ENCODE measurements at regions of chr20 and their contacts with region 1.

Region 1: DNA sequence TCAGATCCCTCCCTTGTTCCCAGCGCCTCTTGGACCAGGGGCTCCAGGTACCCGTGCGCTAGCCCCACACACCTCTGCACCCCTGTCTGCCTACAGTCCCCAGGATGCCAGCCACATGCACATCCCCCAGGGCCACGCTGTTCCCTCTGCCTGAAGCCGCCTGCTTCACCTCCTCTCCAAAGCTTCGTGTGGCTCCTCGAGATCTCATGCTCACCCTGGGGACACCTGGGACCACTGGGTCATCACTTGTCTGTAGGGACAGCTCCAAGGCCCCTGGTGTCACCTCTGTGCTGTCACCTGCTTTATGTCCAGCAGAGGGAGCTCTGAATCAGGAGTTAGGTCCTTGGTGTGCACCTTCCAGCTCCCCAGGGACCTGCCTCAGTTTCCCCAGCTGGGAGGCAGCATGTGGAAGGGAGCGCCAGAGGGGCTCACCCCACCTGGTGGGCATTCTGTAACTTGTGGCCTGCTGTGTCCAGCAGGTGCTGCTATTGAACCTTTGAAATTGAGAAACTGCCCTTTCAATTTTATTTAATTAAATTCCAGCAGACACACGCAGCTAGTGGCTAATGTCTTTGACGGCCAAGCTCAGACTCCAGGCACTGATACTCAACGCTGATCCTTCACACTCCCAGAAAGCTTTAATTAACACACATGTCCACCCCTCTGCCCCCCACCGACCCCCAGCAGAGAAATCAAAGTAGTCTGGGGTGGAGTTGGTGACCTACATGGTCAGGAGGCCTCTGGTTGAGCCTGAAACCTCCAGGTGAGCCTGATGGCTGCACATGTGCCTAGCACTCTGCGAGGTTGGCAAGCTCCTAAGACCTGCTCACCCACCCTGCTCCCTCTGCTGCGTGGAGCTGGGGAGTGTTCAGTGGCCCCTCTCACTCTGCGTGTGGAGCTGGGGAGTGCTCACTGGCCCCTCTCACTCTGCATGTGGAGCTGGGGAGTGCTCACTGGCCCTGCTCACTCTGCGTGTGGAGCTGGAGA is 7.6 kb upstream of the YTHDF1 start:
- DNase-seq: peak; percentile 81
- ATAC-seq: peak; percentile 71
- H3K4me3 Mint-ChIP-seq: no peak overlapping the region
- H3K27ac Mint-ChIP-seq: no peak overlapping the region
- H3K4me1 Mint-ChIP-seq: peaks cover 2% of the 10 kb centered on the region
- H3K27me3 Mint-ChIP-seq: peaks cover 4% of the 10 kb centered on the region; the same call in 1 of the 2 replicates
- CTCF ChIP-seq: peak; percentile 81

Region 2: GRCh38 chr20:63172720-63173119 is 50.8 kb before region 1 on chr20:
- CTCF ChIA-PET with region 1: interaction called, 19 read pairs
- POLR2A ChIA-PET with region 1: no interaction called
- DNase-seq: peak; percentile 74
- ATAC-seq: peak; percentile 58
- H3K4me3 Mint-ChIP-seq: no peak overlapping the region
- H3K27ac Mint-ChIP-seq: no peak overlapping the region
- H3K4me1 Mint-ChIP-seq: peaks cover 6% of the 10 kb centered on the region
- H3K27me3 Mint-ChIP-seq: peaks cover 56% of the 10 kb centered on the region
- CTCF ChIP-seq: peak; percentile 25; the same call in 1 of the 2 replicates

Region 3: GRCh38 chr20:63202811-63203526 is 20.5 kb before region 1 on chr20:
- CTCF ChIA-PET with region 1: interaction called, 30 read pairs
- POLR2A ChIA-PET with region 1: no interaction called
- DNase-seq: no peak
- ATAC-seq: no peak
- H3K4me3 Mint-ChIP-seq: no peak overlapping the region
- H3K27ac Mint-ChIP-seq: no peak overlapping the region
- H3K4me1 Mint-ChIP-seq: peaks cover 5% of the 10 kb centered on the region
- H3K27me3 Mint-ChIP-seq: no peaks in the 10 kb centered on the region
- CTCF ChIP-seq: no peak

Region 4: GRCh38 chr20:63253438-63254236 is 30.1 kb after region 1 on chr20:
- CTCF ChIA-PET with region 1: interaction called, 173 read pairs
- POLR2A ChIA-PET with region 1: interaction called, 4 read pairs
- DNase-seq: peak; percentile 79
- ATAC-seq: peak; percentile 47
- H3K4me3 Mint-ChIP-seq: peak overlapping the region; percentile 62
- H3K27ac Mint-ChIP-seq: no peak overlapping the region
- H3K4me1 Mint-ChIP-seq: peaks cover 23% of the 10 kb centered on the region
- H3K27me3 Mint-ChIP-seq: peaks cover 51% of the 10 kb centered on the region
- CTCF ChIP-seq: no peak

Region 5: DNA sequence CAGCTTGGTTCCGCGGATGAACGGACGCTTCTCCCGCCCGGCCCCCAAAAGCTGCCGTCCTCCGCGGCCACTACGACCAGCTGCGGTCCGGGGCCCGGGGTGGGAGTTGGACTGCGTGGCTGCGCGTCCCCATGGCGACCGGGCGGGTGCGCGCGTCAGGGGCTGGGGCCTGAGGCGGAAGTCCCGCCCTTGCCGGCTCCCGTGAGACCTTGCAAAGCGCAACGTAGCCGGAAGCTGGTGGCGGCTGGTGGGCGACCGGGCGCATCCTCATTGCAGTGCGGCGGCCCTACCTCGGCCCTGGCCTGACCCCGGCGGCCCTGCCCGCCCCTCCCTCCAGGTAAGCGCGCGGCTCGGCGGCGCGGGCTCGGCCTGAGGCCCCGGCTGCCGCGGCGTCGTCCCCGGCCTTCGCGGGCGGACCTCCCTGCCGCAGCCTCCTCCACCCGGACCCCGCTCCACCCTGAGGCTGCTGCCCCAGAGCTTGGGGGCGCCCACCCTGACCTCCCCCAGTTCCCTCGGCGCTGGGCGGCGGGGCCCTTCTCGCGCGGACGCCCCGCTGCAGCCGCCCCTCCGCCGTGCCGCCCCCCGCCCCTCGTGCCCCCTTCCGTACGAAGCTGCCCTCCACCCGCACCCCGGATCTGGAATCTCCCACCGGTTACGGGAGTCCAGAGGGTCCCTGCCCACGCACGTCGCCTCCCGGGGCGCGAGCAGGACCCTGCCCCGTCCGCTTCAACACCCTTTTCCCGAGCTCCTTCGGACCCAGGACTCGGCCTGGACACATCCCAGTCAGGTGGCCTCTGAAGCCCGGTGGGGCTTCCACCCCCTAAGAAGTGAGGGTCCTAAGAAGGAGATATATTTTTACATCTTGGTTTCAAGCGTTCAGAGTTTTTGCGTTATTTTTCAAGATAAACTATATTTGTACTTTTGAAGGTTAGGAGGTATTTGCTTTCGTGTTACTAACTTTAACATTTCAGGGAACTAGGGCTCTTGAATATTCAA is 49.4 kb after region 1 on chr20 and contains the start of gene ARFGAP1:
- CTCF ChIA-PET with region 1: interaction called, 43 read pairs
- POLR2A ChIA-PET with region 1: no interaction called
- DNase-seq: peak; percentile 92
- ATAC-seq: peak; percentile 93
- H3K4me3 Mint-ChIP-seq: peak within 1 kb of the TSS; percentile 92
- H3K27ac Mint-ChIP-seq: peak within 1 kb of the TSS; percentile 94
- H3K4me1 Mint-ChIP-seq: peaks cover 16% of the 10 kb centered on the region
- H3K27me3 Mint-ChIP-seq: no peaks in the 10 kb centered on the region
- CTCF ChIP-seq: no peak
- total RNA-seq, gene ARFGAP1: 115 to 207 TPM (median 121 TPM) in 3 replicates

Region 6: DNA sequence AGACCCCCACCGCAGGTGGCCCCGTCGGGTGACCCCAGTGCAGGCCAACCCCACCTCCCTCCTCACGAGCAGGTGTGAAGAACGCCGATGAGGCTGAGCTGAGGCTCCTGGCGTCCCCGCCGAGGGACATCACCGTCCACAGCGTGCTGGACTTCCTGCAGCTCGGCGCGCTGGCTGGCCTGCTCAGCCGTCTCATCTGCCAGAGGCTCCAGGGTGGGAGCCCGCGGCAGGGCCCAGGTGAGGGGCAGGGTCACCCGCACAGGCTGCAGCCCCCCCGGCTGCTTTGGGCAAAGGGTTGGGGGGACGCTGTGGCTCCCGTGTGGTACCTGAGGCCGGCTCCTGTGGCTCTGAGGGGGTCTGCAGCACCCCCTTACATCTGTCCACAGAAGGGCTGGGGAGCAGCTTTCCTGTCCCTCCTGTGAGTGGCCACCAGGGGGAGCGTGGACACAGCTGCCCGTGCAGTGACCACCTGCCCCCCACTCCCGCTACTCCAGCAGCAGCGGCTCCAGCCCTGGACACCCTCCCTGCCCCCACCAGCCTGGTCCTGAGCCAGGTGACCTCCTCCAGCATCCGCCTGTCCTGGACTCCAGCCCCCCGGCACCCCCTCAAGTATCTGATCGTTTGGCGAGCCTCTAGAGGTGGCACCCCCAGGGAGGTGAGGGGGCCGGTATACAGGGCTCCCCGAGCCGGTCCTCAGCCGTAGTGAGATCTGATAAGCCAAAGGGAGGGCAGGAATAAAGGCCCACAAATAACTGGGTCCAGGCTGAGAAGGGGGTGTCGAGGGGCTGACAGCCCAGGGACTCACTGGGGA is 86.0 kb after region 1 on chr20:
- CTCF ChIA-PET with region 1: interaction called, 20 read pairs
- POLR2A ChIA-PET with region 1: no interaction called
- DNase-seq: peak; percentile 75
- ATAC-seq: peak; percentile 76
- H3K4me3 Mint-ChIP-seq: no peak overlapping the region
- H3K27ac Mint-ChIP-seq: no peak overlapping the region
- H3K4me1 Mint-ChIP-seq: no peaks in the 10 kb centered on the region
- H3K27me3 Mint-ChIP-seq: peaks cover 3% of the 10 kb centered on the region; the same call in 1 of the 2 replicates
- CTCF ChIP-seq: peak; percentile 94

Region 7: DNA sequence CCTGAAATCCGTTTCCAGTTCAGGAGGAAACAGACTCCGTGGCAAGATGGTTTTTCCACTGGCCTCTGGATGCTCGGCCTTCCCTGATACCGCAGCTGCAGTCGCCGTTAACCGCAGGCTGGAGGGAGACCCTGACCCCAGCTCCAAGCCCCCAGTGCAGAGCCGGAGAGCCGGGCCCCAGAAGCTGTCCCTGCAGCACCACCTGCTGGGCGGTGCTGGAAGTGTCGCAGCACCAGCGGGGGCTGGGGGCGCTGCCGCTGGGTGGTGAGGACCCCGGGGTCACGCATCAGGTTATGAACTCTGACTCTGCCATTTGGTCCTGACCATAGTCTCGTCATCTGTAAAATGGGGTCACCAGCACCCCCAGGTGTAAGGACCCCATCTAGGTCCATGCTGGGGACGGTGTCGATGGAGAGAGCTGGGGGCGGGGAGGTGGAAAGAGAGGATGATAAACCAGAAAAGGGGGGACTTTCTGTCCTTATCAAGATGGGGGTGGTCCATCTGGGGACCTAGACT is 158.4 kb after region 1 on chr20:
- CTCF ChIA-PET with region 1: interaction called, 45 read pairs
- POLR2A ChIA-PET with region 1: no interaction called
- DNase-seq: peak; percentile 79
- ATAC-seq: peak; percentile 65
- H3K4me3 Mint-ChIP-seq: no peak overlapping the region
- H3K27ac Mint-ChIP-seq: no peak overlapping the region
- H3K4me1 Mint-ChIP-seq: peaks cover 18% of the 10 kb centered on the region
- H3K27me3 Mint-ChIP-seq: peaks cover 15% of the 10 kb centered on the region
- CTCF ChIP-seq: peak; percentile 95

Region 8: GRCh38 chr20:63657937-63658748 is 434.6 kb after region 1 on chr20 and contains the start of gene RTEL1:
- CTCF ChIA-PET with region 1: no interaction called
- POLR2A ChIA-PET with region 1: no interaction called
- DNase-seq: peak; percentile 92
- ATAC-seq: peak; percentile 83
- H3K4me3 Mint-ChIP-seq: peak within 1 kb of the TSS; percentile 89
- H3K27ac Mint-ChIP-seq: peak within 1 kb of the TSS; percentile 87
- H3K4me1 Mint-ChIP-seq: peaks cover 23% of the 10 kb centered on the region
- H3K27me3 Mint-ChIP-seq: no peaks in the 10 kb centered on the region
- CTCF ChIP-seq: no peak
- total RNA-seq, gene RTEL1: 39.3 to 44.9 TPM (median 40.5 TPM) in 3 replicates